Mammary epithelial cell (primary cell): ENCODE measurements at regions of chr14 and their contacts with region 1.

Region 1: DNA sequence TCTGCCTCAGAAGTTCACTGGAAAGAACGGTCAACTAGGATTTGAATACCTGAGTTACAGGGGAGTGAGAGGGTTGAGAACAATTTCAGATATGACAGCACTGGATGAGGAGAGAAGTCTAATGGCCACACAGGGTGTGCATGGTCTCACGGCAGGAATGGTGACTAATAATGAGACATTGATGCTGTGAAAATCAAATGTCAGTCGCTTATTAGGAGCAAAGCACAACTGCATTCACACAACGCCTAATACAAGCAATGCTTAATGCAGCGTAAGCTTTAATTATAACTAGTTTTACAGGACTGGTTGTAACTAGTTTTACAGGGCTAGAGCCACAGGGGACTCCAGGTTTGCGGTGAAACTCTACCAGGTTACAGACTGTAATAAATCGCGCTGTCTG is 23.4 kb upstream of the PRIMA1 start:
- DNase-seq: no peak
- H3K4me3 ChIP-seq: no peak overlapping the region
- H3K27ac ChIP-seq: no peak overlapping the region
- H3K4me1 ChIP-seq: no peaks in the 10 kb centered on the region
- H3K27me3 ChIP-seq: no peaks in the 10 kb centered on the region
- CTCF ChIP-seq: no peak

Region 2: DNA sequence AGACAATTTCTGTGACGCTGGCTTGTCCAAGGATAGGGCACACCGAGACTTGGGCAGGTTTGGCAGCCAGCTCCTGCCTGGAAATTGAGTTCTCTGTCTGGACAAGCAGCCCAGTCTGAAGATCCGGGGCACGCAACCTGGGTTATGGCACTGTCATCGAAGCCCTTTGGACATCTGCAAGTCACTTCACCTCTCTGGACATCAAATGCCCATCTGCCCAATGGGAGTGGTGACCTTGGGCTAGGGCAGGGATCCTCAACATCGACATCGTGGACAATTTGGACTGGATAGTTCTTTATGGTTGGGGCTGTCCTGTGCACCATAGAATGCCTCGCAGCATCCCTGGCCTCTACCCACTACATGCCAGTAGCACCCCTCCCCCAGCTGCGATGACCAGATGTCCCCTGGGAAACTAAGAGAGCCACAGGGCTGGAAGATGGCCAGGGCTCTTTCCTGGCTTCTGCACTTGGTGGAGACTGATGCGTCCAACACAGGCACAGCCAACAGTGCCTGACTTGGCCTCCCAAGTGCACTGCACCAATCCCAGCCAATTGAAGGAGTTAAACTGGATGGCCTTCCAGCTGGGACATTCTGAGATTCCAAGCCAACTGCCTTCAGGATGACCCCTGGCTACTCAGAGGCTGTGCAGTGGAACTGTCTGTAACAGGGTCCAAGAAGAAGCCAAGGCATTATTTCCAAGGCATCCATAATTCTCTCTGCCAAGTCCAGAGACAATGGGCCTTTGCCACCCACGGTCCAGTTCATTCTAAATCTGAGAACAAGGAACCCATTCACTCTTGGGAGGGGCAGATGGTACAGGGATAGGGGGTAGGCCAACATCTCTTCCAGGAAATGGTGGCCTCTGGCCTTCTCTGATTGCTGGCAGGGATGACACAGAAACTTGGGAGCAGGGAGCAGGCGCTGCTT is 58.8 kb before region 1 on chr14:
- CTCF ChIA-PET with region 1: no interaction called
- dilution Hi-C with region 1: loop called (anchors 5 kb)
- in situ Hi-C with region 1: no loop called
- intact Hi-C with region 1: no loop called
- DNase-seq: no peak
- H3K4me3 ChIP-seq: no peak overlapping the region
- H3K27ac ChIP-seq: no peak overlapping the region
- H3K4me1 ChIP-seq: peaks cover 4% of the 10 kb centered on the region
- H3K27me3 ChIP-seq: no peaks in the 10 kb centered on the region
- CTCF ChIP-seq: no peak

Region 3: GRCh38 chr14:93868165-93868564 is 56.5 kb after region 1 on chr14:
- CTCF ChIA-PET with region 1: no interaction called
- dilution Hi-C with region 1: loop called (anchors 5 kb)
- in situ Hi-C with region 1: no loop called
- intact Hi-C with region 1: no loop called
- DNase-seq: no peak
- H3K4me3 ChIP-seq: no peak overlapping the region
- H3K27ac ChIP-seq: no peak overlapping the region
- H3K4me1 ChIP-seq: no peaks in the 10 kb centered on the region
- H3K27me3 ChIP-seq: no peaks in the 10 kb centered on the region
- CTCF ChIP-seq: no peak

Region 4: DNA sequence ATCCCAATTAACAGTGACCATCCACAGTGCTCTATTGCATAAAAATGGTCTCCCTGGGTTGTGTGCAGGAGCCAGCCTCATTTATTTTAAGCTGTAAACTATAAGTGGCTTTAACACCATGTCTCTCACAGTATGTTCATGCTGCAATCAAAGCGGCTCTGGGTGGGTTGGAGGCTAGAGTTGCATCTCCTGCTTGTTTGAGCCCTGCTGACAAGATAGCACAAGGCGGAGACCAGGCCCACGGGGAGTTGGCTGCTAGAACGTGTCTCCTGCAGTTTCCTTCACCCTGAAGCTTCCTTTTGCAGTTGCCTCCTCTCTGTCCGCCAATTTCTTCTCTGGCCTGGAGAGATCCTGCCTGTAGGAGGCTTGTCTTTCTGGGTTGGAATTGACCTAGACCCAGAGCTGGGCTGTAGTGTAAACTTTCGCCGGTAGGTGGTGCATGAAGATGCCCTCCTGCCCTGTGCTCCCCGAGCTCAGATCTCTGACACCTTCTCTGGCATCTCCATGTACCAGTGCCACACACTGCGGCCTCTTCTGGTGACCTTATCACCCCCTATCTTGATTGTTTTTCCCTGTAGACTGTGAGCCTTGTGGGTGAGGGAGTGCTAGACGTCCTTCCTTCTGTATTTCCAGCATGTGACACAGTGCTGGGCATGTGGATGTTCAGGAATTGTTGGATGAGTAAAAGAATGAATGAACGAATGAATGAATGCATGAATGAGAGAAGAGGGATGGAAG is 224.8 kb after region 1 on chr14:
- CTCF ChIA-PET with region 1: no interaction called
- dilution Hi-C with region 1: no loop called
- in situ Hi-C with region 1: no loop called
- intact Hi-C with region 1: no loop called
- DNase-seq: peak; percentile 46
- H3K4me3 ChIP-seq: no peak overlapping the region
- H3K27ac ChIP-seq: no peak overlapping the region
- H3K4me1 ChIP-seq: no peaks in the 10 kb centered on the region
- H3K27me3 ChIP-seq: no peaks in the 10 kb centered on the region
- CTCF ChIP-seq: peak; percentile 86 to 90